ENCODE measurements at regions of chr7 and their contacts with region 1.

Region 1: GRCh38 chr7:152122540-152122939 is 97.1 kb downstream of the GALNT11 start:
- DNase-seq: no peak
- ATAC-seq: no peak
- H3K4me3 ChIP-seq: no peak overlapping the region
- H3K27ac ChIP-seq: no peak overlapping the region
- H3K4me1 ChIP-seq: no peaks in the 10 kb centered on the region
- H3K27me3 ChIP-seq: no peaks in the 10 kb centered on the region
- CTCF ChIP-seq: no peak

Region 2: GRCh38 chr7:152158801-152159587 is 36.5 kb after region 1 on chr7:
- intact Hi-C with region 1: loop called in 1 of 10 experiments (anchors 2 kb)
- DNase-seq: no peak
- ATAC-seq: no peak
- H3K4me3 ChIP-seq: no peak overlapping the region
- H3K27ac ChIP-seq: no peak overlapping the region
- H3K4me1 ChIP-seq: peaks cover 0 to 5% (median 0%) of the 10 kb centered on the region in 9 donors
- H3K27me3 ChIP-seq: no peaks in the 10 kb centered on the region
- CTCF ChIP-seq: no peak